ENCODE measurements at regions of chr17 and their contacts with region 1.

Region 1: GRCh38 chr17:12431188-12431587 is 234.5 kb upstream of the MYOCD start:
- DNase-seq: peak; percentile 48
- CTCF ChIP-seq: no peak

Region 2: DNA sequence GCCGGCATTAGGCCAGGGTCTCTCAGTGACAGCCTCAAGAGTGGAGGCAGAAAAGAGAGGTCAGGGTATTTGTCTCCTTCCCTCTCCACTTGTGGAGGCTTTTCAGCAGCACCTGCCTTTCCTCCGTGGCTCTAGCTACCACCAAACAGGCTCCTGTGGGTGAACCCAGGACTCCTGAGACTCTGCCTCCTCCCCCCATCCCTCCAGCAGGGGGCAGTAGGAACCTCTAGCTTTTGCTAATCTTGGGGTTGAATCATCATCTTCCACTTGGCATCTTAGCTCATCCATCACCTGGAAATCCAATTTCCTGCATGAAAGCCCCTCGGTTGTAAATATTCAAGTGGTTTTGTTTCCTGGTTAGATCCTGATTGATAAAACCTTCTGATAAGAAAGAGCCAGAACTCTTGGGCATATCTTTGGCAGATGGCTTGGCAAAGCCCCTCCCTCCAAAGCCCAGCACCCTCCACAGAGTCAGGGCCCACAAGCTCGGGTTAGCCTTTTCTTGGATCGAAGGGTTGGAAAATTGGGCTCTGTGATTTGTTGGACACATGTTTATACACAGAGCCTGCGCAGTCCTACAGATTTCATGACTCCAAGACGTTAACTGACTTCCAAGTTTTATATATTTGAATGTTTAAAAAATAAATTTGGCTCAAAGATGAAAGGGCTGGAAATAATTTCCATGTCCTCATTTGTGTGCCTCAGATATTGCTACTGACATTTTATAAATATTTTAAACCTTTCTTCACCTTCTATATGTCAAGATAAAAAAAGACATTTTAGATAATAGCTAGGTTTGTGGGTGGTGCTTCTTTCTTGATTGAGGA is 88.4 kb before region 1 on chr17:
- in situ Hi-C with region 1: loop called (anchors 25 kb)
- DNase-seq: peak; percentile 37
- CTCF ChIP-seq: peak; percentile 48

Region 3: DNA sequence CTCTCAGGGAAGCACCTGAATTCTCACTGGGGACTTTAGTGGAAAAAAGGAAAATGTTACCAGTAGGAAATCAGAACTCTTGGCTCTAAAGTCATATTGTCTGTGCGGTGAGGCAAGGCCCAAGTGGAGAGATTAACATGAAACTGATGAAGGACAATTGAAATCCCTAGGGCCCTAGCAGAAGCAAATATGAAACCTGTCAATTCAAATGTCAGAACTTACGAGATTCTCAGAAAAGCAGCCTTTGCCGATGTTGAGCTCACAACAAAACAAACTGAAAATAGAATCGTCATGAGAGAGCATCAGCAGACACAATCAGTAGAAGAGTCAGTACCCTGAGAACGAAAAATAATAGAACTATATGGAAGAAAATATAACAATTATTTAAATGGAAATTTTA is 477.9 kb after region 1 on chr17:
- in situ Hi-C with region 1: no loop called
- DNase-seq: no peak
- CTCF ChIP-seq: no peak

Measured in GM13977 (cell line).